ENCODE measurements at regions of chr15 and their contacts with region 1.

Region 1: DNA sequence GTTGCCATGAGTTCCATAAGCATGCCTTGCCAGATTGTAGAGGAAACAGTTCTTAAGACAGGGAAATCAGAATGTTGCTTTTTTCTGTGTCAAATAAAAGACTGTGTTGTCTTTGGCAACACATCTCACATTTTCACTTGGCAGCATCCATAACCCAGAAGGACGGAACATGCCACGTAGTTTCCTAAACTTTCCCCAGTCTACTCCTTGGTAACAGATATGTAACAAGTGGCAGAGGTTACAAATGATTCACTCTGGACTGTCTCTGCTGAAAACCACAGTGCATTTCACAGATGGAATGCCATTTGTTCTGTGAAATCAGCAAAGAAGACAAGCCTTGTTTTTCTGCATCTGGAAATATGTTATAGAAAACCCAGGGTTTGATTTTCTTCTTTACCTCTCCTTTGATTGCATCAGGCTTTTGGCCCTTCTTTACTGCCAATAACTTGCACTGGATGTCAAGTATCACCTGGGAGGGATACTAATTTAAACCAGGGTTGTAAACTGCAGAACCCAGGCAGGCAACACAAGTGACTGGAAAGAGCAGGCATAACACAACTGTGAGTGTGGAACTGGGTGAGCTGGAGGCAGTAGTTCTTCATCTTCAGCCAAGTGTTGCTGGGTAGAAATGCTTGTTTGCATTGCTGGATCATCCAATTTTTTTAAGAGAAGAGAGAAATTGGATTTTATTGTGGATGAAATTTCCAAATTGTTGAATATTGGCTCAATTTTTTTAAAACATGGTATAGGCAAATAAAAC is 124.4 kb upstream of the FOXB1 start:
- DNase-seq: no peak
- ATAC-seq: no peak
- H3K4me3 ChIP-seq: peak overlapping the region in 1 of 2 donors; percentile 1
- H3K27ac ChIP-seq: no peak overlapping the region
- H3K4me1 ChIP-seq: no peaks in the 10 kb centered on the region
- H3K27me3 ChIP-seq: no peaks in the 10 kb centered on the region

Region 2: GRCh38 chr15:58715266-58715917 is 1164.3 kb before region 1 on chr15:
- intact Hi-C with region 1: no loop called
- DNase-seq: no peak
- ATAC-seq: no peak
- H3K4me3 ChIP-seq: no peak overlapping the region
- H3K27ac ChIP-seq: no peak overlapping the region
- H3K4me1 ChIP-seq: no peaks in the 10 kb centered on the region
- H3K27me3 ChIP-seq: no peaks in the 10 kb centered on the region

Region 3: GRCh38 chr15:59862191-59863155 is 17.2 kb before region 1 on chr15:
- intact Hi-C with region 1: loop called in 1 of 2 experiments (anchors 2 kb)
- DNase-seq: no peak
- ATAC-seq: no peak
- H3K4me3 ChIP-seq: no peak overlapping the region
- H3K27ac ChIP-seq: no peak overlapping the region
- H3K4me1 ChIP-seq: no peaks in the 10 kb centered on the region
- H3K27me3 ChIP-seq: no peaks in the 10 kb centered on the region

Measured in aorta (tissue), 5 donors.